ENCODE measurements at regions of chr12 and their contacts with region 1.

Region 1: GRCh38 chr12:96219698-96220206 is 25.6 kb downstream of the ELK3 start:
- DNase-seq: no peak
- ATAC-seq: no peak
- H3K4me3 Mint-ChIP-seq: no peak overlapping the region
- H3K27ac Mint-ChIP-seq: peak overlapping the region; percentile 3
- H3K4me1 Mint-ChIP-seq: peaks cover 27% of the 10 kb centered on the region
- H3K27me3 Mint-ChIP-seq: no peaks in the 10 kb centered on the region
- CTCF ChIP-seq: no peak

Region 2: DNA sequence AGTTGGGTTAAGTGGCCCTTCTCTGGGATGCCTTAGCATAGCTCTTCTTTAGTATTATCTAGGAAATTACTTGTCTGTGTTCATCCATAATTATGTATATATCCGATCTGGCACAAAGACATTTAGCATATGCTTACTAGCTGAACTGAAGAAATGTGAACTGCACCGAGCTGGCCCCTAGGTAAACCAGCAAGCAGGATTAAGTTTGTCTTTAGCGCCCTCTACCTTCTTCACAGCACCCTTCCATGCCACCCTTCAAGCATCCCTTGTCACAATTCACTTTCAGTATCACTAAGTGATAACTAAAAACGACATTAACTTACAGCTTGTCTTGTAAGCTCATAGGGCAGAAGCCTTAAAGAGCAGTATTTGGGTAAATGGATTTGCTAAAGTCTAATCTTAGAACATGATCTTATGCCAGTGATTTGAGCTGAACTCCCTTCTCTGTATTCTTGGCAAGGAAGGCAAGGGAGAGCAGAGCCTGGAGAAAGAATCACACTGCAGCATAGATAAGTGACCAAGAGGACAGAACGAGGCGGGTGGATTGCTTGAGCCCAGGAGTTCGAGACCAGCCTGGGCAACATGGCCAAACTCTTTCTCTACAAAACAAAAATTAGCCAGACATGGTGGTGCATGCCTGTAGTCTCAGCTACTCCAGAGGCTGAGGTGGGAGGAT is 221.0 kb before region 1 on chr12:
- CTCF ChIA-PET with region 1: interaction called, 11 read pairs
- POLR2A ChIA-PET with region 1: no interaction called
- intact Hi-C with region 1: no loop called
- DNase-seq: peak; percentile 67
- ATAC-seq: peak; percentile 97
- H3K4me3 Mint-ChIP-seq: no peak overlapping the region
- H3K27ac Mint-ChIP-seq: no peak overlapping the region
- H3K4me1 Mint-ChIP-seq: peaks cover 3% of the 10 kb centered on the region
- H3K27me3 Mint-ChIP-seq: no peaks in the 10 kb centered on the region
- CTCF ChIP-seq: peak; percentile 71

Region 3: DNA sequence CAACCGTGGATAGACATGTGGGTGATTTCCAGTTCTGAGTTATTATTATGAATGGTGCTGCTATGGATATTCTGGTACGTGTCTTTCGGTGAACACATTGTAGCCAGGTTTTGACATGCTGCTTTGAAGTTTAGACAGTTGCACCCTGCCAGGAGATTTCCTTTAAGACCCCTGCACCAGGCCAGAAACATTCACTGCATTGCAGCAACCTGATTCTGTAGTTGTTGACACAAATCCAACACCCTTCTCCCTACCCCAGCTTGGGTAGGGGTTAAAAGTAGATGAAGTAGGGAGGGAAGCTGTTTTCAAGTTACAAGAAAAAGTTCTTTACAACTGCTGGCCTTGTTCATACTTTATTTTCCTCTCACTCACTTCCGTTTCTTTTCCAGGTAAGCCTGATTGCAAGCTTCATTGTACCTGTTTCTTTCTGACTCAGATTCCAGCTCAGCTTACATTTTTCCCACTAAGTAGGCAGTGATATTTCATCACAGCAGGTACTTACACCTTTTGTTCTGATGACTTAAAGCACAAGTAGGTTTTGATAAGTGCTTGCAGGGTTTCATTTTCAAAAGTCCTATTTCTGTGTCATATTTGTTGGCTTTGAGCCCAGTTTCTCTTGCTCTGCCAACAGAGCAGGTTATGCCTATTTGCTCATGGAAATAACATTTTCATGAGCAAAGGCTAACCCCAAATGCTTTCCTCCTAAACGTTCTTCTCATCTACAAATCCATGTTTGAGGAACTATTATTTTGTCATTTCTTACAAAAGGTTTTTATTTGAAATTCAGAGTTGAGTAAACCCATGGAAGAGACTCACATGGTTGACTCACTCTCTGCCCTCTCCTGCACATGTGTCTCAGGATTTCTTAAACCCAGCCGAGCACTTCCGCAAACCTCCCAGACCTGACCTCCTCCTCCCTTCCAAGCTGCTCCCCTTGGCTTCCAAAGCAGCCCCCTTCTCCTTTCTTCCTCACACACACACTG is 172.2 kb before region 1 on chr12:
- CTCF ChIA-PET with region 1: interaction called, 12 read pairs
- POLR2A ChIA-PET with region 1: no interaction called
- intact Hi-C with region 1: no loop called
- DNase-seq: peak; percentile 28
- ATAC-seq: peak; percentile 78
- H3K4me3 Mint-ChIP-seq: peak overlapping the region; percentile 31
- H3K27ac Mint-ChIP-seq: peak overlapping the region; percentile 90
- H3K4me1 Mint-ChIP-seq: peaks cover 39% of the 10 kb centered on the region
- H3K27me3 Mint-ChIP-seq: no peaks in the 10 kb centered on the region
- CTCF ChIP-seq: no peak

Region 4: GRCh38 chr12:96177013-96177412 is 42.7 kb before region 1 on chr12:
- CTCF ChIA-PET with region 1: interaction called, 11 read pairs
- POLR2A ChIA-PET with region 1: no interaction called
- intact Hi-C with region 1: no loop called
- DNase-seq: peak; percentile 91
- ATAC-seq: peak; percentile 97
- H3K4me3 Mint-ChIP-seq: peak overlapping the region; percentile 7
- H3K27ac Mint-ChIP-seq: peak overlapping the region; percentile 86
- H3K4me1 Mint-ChIP-seq: peaks cover 31% of the 10 kb centered on the region
- H3K27me3 Mint-ChIP-seq: no peaks in the 10 kb centered on the region
- CTCF ChIP-seq: no peak

Region 5: DNA sequence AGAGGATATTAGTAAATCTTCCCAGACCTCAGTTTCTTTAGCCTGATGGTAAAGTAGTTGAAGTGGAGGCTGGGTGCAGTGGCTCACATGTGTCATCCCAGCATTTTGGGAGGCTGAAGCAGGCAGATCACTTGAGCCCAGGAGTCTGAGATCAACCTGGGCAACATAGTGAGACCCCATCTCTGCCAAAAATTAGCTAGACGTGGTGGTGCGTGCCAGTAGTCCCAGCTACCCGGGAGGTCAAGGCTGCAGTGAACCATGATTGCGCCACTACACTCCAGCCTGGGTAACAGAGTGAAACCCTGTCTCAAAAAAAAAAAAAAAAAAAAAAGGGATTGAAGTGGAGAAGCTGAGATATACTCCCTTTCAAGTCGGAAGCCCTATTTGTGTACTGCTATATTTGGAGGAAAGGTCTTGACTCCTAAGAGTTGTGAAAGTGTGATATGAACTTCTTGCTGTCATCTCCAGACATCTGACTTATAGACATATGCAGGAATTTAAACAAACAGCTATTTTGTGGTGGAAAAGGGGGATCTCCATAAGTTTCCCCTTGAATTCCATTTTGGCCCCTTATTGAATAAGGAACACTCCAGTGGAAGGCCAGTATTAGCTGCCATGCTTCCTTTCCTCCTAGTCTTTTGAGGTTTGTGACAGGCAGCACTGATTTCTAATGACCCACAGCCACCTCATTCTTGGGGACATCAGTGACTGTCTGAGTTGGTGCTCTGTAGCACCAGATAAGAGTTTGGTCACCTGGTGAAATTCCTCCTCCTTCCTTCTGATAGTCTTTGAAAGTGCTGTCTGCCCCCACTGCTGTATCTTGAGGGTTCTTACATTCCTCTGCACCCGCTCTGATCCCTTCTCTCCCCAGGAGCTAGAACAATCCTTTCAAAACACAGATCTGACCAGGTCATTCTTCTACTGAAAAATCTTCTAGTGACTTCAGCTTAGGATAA is 18.2 kb before region 1 on chr12:
- CTCF ChIA-PET with region 1: interaction called, 16 read pairs
- POLR2A ChIA-PET with region 1: interaction called, 3 read pairs
- intact Hi-C with region 1: loop called (anchors 2 kb)
- DNase-seq: no peak
- ATAC-seq: no peak
- H3K4me3 Mint-ChIP-seq: no peak overlapping the region
- H3K27ac Mint-ChIP-seq: peak overlapping the region; percentile 5
- H3K4me1 Mint-ChIP-seq: peaks cover 71% of the 10 kb centered on the region
- H3K27me3 Mint-ChIP-seq: no peaks in the 10 kb centered on the region
- CTCF ChIP-seq: no peak

Region 6: GRCh38 chr12:96516472-96517430 is 297.0 kb after region 1 on chr12:
- CTCF ChIA-PET with region 1: interaction called, 38 read pairs
- POLR2A ChIA-PET with region 1: no interaction called
- intact Hi-C with region 1: loop called (anchors 5 kb)
- DNase-seq: peak; percentile 96
- ATAC-seq: peak; percentile 89
- H3K4me3 Mint-ChIP-seq: peak overlapping the region; percentile 35
- H3K27ac Mint-ChIP-seq: peak overlapping the region; percentile 62
- H3K4me1 Mint-ChIP-seq: peaks cover 15% of the 10 kb centered on the region
- H3K27me3 Mint-ChIP-seq: no peaks in the 10 kb centered on the region
- CTCF ChIP-seq: peak; percentile 77